A549 (cell line): ENCODE measurements at regions of chr2 and their contacts with region 1.

Region 1: DNA sequence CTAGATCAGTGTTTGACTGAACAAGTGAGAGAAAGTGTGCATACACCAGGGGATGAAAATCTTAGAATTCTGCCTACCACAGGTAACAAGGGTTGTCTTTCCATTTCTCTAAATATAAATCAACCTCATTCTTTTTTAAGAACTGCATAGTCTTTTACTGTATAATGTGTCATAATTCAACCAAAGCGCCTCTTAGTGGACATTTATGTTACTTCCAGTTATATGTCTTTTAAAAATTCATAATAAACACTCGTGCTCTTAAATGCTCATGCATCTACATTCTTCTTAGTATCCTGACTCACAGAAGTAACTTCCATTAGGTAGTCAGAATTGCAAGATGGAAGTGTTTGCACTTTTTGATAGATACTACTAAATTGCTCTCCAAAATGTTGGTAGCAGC is 76.2 kb downstream of the CHRNA1 start:
- DNase-seq: peak in 1 of 2 experiments; percentile 34
- ATAC-seq: peak in 1 of 2 experiments; percentile 56; a peak in 2 of 6 replicates
- H3K4me3 ChIP-seq: no peak overlapping the region
- H3K27ac ChIP-seq: no peak overlapping the region
- H3K4me1 ChIP-seq: 0 out of 3 replicates have a peak, but pooled peaks cover 8% of the 10 kb centered on the region
- CTCF ChIP-seq: peak; percentile 75
- EP300 ChIP-seq: no peak
- POLR2A ChIP-seq: no peak
- RAD21 ChIP-seq: peak; percentile 60 to 63

Region 2: DNA sequence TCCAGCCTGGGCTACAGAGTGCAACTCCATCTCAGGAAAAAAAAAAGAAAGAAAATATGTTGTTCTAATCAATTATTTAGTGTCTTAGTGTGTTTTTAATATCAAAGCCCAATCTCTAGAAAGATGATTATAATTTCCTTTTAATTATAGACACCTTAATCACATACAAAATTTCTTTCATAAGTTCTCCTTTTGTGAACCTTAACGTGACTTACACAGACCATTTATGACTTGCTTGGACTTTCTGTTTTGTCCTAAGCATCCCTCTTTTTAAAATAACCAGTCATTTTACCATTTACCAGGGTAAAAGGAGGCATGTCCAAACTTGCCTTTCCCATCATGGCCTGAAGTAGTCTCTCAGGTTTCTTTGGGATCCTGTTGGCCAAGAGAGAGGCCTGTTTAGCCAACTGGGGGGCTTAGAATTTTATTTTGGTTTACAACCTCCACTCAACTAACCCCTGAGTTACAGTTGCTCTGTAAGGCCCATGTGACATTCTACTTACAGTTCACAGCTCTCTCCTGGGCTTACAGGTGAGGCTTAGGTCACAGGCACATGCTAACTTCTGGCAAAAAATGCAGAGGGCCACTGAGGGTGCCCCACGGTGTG is 177.4 kb before region 1 on chr2:
- CTCF ChIA-PET with region 1: no interaction called
- POLR2A ChIA-PET with region 1: no interaction called
- DNase-seq: peak in 1 of 2 experiments; percentile 62
- ATAC-seq: no peak
- H3K4me3 ChIP-seq: no peak overlapping the region
- H3K27ac ChIP-seq: no peak overlapping the region
- H3K4me1 ChIP-seq: no peaks in the 10 kb centered on the region
- CTCF ChIP-seq: no peak
- EP300 ChIP-seq: no peak
- POLR2A ChIP-seq: no peak
- RAD21 ChIP-seq: no peak

Region 3: DNA sequence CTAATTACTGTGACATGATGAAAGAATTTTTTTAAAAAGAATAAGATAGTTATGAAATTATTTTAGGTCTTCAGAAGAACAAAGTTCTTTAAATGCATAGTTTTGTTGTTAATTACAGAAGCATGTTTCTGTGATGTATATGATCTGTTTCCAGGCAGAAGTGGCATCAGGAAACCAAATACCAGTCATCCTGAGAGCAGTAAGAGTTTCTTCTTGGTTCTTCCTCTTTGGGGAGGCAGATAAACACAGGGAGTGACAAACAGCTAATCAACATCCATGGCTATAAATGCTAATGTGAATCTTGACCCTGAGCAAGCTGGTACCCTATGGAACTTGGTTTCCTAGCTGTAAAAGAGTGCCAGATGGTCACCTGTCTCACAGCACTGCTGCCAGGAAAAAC is 119.7 kb before region 1 on chr2:
- CTCF ChIA-PET with region 1: interaction called, 13 read pairs
- POLR2A ChIA-PET with region 1: no interaction called
- DNase-seq: no peak
- ATAC-seq: no peak
- H3K4me3 ChIP-seq: no peak overlapping the region
- H3K27ac ChIP-seq: no peak overlapping the region
- H3K4me1 ChIP-seq: peaks cover 4% of the 10 kb centered on the region; the same call in 1 of the 3 replicates
- CTCF ChIP-seq: no peak
- EP300 ChIP-seq: no peak
- POLR2A ChIP-seq: no peak
- RAD21 ChIP-seq: no peak

Region 4: GRCh38 chr2:174577967-174578589 is 110.0 kb before region 1 on chr2:
- CTCF ChIA-PET with region 1: interaction called, 73 read pairs
- POLR2A ChIA-PET with region 1: no interaction called
- DNase-seq: peak in 1 of 2 experiments; percentile 50
- ATAC-seq: peak; percentile 70 to 84; a peak in 4 of 6 replicates
- H3K4me3 ChIP-seq: no peak overlapping the region
- H3K27ac ChIP-seq: no peak overlapping the region
- H3K4me1 ChIP-seq: no peaks in the 10 kb centered on the region
- CTCF ChIP-seq: peak; percentile 71
- EP300 ChIP-seq: no peak
- POLR2A ChIP-seq: no peak
- RAD21 ChIP-seq: peak; percentile 80 to 91

Region 5: DNA sequence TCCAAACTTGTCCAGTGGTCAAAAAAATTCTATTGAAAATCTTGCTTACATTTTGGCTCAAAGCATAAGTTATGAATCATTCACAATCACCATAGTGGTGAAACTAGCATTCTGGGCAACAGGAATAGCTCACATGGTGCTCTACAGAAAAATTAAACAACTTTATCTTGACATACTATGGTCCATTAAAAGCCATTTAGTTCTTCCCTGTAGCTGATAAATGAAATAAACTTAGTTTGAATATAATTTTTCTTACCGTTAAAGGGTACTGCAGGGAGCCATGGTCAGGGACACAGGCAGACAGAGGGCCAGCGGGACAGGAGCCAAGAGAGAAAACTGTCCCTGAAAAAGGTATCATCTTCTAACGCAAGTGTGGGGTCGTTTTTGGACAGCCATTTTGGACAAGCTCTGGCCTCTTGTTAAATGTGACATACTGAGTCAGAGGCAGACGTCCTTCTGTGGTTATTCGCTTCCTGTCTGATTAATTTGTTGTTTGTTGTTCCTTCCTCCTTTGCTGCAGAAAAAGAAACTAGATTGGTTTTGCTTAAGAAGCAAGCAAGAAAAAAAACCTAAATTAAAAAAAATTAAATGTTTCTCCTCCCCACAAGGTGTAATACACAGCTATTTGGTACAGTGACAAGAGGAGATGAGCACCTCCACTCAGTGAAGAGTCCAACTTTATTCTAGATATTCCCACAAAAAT is 90.6 kb before region 1 on chr2 and contains the start of gene WIPF1:
- CTCF ChIA-PET with region 1: interaction called, 10 read pairs
- POLR2A ChIA-PET with region 1: no interaction called
- DNase-seq: no peak
- ATAC-seq: no peak
- H3K4me3 ChIP-seq: no peak within 1 kb of the TSS
- H3K27ac ChIP-seq: no peak within 1 kb of the TSS
- H3K4me1 ChIP-seq: peaks cover 13% of the 10 kb centered on the region; the same call in 1 of the 3 replicates
- CTCF ChIP-seq: no peak
- EP300 ChIP-seq: no peak
- POLR2A ChIP-seq: no peak
- RAD21 ChIP-seq: no peak
- polyA plus RNA-seq, gene WIPF1: 18.4 and 20.1 TPM in 2 replicates

Region 6: GRCh38 chr2:174603280-174603679 is 84.8 kb before region 1 on chr2:
- CTCF ChIA-PET with region 1: interaction called, 12 read pairs
- POLR2A ChIA-PET with region 1: no interaction called
- DNase-seq: peak in 1 of 2 experiments; percentile 48
- ATAC-seq: peak; percentile 49 to 64; a peak in 3 of 6 replicates
- H3K4me3 ChIP-seq: no peak overlapping the region
- H3K27ac ChIP-seq: no peak overlapping the region
- H3K4me1 ChIP-seq: peaks cover 34% of the 10 kb centered on the region
- CTCF ChIP-seq: peak; percentile 32; the same call in 2 of the 3 replicates
- EP300 ChIP-seq: no peak
- POLR2A ChIP-seq: no peak
- RAD21 ChIP-seq: peak; percentile 27 to 35; a peak in 1 of 5 replicates